ENCODE measurements at regions of chrX and their contacts with region 1.

Region 1: GRCh38 chrX:129726307-129727111 is 12.3 kb upstream of the XPNPEP2 start:
- DNase-seq: peak; percentile 79

Region 2: DNA sequence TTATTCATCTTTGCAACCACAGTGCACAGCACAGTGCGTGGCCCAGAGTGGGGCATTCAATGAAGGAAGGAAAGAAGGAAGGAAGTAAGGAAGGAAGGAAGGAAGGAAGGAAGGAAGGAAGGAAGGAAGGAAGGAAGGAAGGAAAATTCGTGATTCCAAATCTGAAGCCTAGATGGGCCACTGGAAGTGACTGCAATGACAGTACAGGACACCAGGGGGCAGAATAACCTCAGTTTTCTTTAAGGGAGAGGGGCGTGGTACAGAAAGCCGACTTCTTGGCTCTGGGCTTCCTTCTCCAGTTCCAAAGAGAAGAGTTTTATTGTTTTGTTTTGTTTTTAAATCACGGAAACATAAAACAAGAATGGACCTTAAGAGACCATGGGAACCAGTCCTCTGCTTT is 119.6 kb before region 1 on chrX:
- CTCF ChIA-PET with region 1: interaction called, 22 read pairs
- POLR2A ChIA-PET with region 1: no interaction called
- DNase-seq: peak; percentile 82

Region 3: GRCh38 chrX:129637217-129638109 is 89.0 kb before region 1 on chrX:
- CTCF ChIA-PET with region 1: interaction called, 38 read pairs
- POLR2A ChIA-PET with region 1: no interaction called
- DNase-seq: peak; percentile 88

Region 4: GRCh38 chrX:129737916-129738315 is 11.4 kb after region 1 on chrX:
- CTCF ChIA-PET with region 1: interaction called, 11 read pairs
- POLR2A ChIA-PET with region 1: interaction called, 3 read pairs
- DNase-seq: no peak